ENCODE measurements at regions of chr5 and their contacts with region 1.

Region 1: GRCh38 chr5:141883184-141883891 is 5.1 kb upstream of the PCDH1 start:
- DNase-seq: peak in 3 of 4 donors; percentile 52 to 61 (median 54)
- ATAC-seq: no peak
- H3K4me3 ChIP-seq: no peak overlapping the region
- H3K27ac ChIP-seq: no peak overlapping the region
- H3K4me1 ChIP-seq: peaks cover 26% of the 10 kb centered on the region
- H3K27me3 ChIP-seq: peaks cover 0 to 21% of the 10 kb centered on the region in 2 donors
- CTCF ChIP-seq: no peak
- POLR2A ChIP-seq: no peak

Region 2: GRCh38 chr5:141951332-141951781 is 68.0 kb after region 1 on chr5:
- intact Hi-C with region 1: loop called (anchors 10 kb)
- DNase-seq: no peak
- ATAC-seq: peak; percentile 19
- H3K4me3 ChIP-seq: no peak overlapping the region
- H3K27ac ChIP-seq: no peak overlapping the region
- H3K4me1 ChIP-seq: no peaks in the 10 kb centered on the region
- H3K27me3 ChIP-seq: no peaks in the 10 kb centered on the region
- CTCF ChIP-seq: no peak
- POLR2A ChIP-seq: no peak

Measured in body of pancreas (tissue), 4 donors.